Esophagus muscularis mucosa (tissue), 4 donors: ENCODE measurements at regions of chr3 and their contacts with region 1.

Region 1: DNA sequence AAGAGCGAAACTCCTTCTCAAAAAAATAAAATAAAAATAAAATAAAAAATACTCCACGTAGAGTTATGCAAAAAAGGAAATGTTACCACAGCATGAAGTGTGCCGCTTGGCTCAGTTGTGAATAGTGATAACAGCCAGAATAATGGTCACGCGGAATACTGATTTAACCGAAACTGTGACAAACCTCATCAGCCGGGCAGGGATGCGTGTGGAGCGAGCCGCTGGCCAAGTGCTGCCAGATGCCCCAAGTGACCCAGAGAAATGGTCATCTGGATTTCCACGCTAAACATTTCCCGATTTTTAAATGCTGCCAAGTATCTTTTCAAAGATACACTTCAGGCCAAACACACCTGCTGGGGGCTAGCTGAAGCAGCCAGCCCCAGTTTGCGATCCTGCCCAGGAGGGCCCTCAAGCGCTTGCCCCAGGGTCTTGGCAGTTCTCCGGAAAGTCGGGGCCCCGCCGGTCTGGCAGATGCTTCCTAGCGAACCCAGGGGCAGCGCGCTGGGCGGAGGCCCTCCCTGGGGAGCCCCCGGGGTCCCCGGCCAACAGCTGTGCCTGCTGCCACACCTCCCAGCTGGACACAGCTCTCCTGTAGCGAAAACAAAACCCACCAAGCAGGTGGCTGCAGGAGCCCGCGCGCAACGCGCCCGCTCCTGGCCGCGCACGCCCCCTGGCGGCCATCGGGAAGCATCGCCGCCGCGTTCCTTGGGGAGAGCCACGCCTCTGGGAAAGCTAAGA is 35.1 kb downstream of the CMTM6 start:
- DNase-seq: peak; percentile 31
- H3K4me3 ChIP-seq: peak overlapping the region; percentile 45 to 60 (median 50)
- H3K27ac ChIP-seq: peak overlapping the region in 1 of 4 donors; percentile 27
- H3K4me1 ChIP-seq: peaks cover 8 to 41% (median 29%) of the 10 kb centered on the region in 4 donors
- H3K27me3 ChIP-seq: no peaks in the 10 kb centered on the region
- CTCF ChIP-seq: peak; percentile 93 to 100 (median 98)
- EP300 ChIP-seq: no peak
- POLR2A ChIP-seq: no peak

Region 2: DNA sequence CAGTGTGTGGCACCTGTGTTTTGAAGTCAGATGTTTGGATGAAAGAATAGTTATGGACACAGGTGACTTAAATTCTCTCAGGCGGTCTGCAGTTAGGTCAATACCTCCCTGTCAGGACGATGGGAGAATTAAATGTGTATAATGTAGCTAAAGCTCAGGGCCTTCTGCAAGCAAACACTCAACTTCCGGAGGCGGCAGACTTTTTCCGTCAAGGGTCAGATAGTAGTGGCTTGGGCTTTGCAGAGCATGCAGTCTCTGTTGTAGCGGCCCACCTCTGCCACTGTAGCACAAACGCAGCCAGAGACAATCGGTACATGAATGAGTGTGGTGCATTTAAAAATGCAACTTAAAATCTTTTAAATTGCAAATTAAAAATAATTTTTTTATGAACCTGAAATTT is 181.6 kb before region 1 on chr3:
- intact Hi-C with region 1: no loop called
- DNase-seq: no peak
- H3K4me3 ChIP-seq: no peak overlapping the region
- H3K27ac ChIP-seq: no peak overlapping the region
- H3K4me1 ChIP-seq: peaks cover 0 to 5% (median 0%) of the 10 kb centered on the region in 4 donors
- H3K27me3 ChIP-seq: no peaks in the 10 kb centered on the region
- CTCF ChIP-seq: no peak
- EP300 ChIP-seq: no peak
- POLR2A ChIP-seq: no peak

Region 3: DNA sequence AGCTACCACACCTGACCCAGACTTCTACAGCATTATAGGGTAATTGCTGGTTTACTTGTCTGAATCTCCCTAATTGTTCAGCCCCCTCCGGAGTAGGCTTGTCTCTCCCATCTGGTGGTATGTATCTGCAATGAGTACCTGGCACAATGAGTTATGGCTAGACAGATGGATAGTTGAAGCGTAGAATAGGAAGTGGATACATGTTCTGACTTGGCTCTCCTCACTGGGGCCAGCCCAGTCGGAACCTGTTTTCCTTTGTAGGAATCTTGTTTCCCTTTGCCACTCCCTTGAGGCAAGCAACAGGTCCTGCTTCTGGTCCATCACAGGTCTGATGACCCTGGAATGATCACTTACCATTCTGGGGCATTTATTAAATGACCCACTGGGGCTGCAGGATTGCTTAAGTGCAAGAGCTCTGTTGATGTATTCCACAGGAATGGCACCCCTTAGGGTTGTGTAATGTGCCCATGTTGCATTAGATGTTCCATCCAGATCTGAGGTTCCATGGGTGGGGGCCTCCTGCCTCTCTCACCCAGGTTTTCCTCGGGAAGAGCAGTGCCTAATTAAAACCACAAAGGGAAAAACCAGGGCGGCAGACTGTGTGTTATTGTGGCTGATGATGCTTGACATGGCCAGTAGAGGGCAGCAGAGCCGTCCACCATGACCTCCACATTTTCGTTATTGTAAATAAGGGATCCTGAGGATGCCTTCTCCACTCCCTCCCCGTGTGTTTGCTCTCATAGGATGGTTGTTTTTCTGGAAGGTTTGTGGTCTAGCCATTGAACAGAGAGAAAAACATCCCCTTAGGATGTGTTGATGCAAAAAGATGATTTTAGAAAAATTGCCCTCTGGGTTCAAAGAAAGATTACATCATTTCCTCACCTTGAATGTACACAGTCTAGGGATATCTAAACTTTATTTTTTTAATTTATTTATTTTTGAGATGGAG is 171.0 kb before region 1 on chr3:
- intact Hi-C with region 1: loop called (anchors 5 kb)
- DNase-seq: no peak
- H3K4me3 ChIP-seq: no peak overlapping the region
- H3K27ac ChIP-seq: no peak overlapping the region
- H3K4me1 ChIP-seq: no peaks in the 10 kb centered on the region
- H3K27me3 ChIP-seq: no peaks in the 10 kb centered on the region
- CTCF ChIP-seq: peak; percentile 80 to 91 (median 89)
- EP300 ChIP-seq: no peak
- POLR2A ChIP-seq: no peak

Region 4: GRCh38 chr3:32374788-32375595 is 92.5 kb before region 1 on chr3:
- intact Hi-C with region 1: loop called (anchors 2 kb)
- DNase-seq: no peak
- H3K4me3 ChIP-seq: no peak overlapping the region
- H3K27ac ChIP-seq: no peak overlapping the region
- H3K4me1 ChIP-seq: peaks cover 0 to 5% (median 0%) of the 10 kb centered on the region in 4 donors
- H3K27me3 ChIP-seq: no peaks in the 10 kb centered on the region
- CTCF ChIP-seq: peak; percentile 61 to 71 (median 69)
- EP300 ChIP-seq: no peak
- POLR2A ChIP-seq: no peak

Region 5: GRCh38 chr3:32401556-32402081 is 65.9 kb before region 1 on chr3:
- intact Hi-C with region 1: loop called (anchors 2 kb)
- DNase-seq: no peak
- H3K4me3 ChIP-seq: peak overlapping the region; percentile 55 to 59 (median 57)
- H3K27ac ChIP-seq: peak overlapping the region; percentile 72 to 83 (median 82)
- H3K4me1 ChIP-seq: peaks cover 25 to 34% (median 31%) of the 10 kb centered on the region in 4 donors
- H3K27me3 ChIP-seq: no peaks in the 10 kb centered on the region
- CTCF ChIP-seq: no peak
- EP300 ChIP-seq: no peak
- POLR2A ChIP-seq: no peak

Region 6: DNA sequence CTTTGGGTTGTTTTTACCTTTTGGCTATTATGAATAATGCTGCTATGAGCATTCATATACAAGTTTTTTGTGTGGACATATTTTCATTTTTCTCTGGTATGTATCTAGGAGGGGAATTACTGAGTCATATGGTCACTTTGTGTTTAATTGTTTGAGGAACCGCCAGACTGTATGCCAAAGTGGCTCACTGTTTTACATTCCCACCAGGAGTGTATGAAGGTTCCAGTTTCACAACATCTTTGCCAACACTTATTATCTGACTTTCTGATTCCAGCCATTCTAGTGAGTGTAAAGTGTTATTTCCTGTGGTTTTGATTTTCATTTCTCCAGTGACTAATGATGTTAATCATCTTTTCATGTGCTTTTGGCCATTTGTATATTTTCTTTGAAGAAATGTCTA is 24.0 kb before region 1 on chr3:
- intact Hi-C with region 1: no loop called
- DNase-seq: no peak
- H3K4me3 ChIP-seq: no peak overlapping the region
- H3K27ac ChIP-seq: no peak overlapping the region
- H3K4me1 ChIP-seq: peaks cover 0 to 2% (median 0%) of the 10 kb centered on the region in 4 donors
- H3K27me3 ChIP-seq: no peaks in the 10 kb centered on the region
- CTCF ChIP-seq: no peak
- EP300 ChIP-seq: no peak
- POLR2A ChIP-seq: no peak

Region 7: DNA sequence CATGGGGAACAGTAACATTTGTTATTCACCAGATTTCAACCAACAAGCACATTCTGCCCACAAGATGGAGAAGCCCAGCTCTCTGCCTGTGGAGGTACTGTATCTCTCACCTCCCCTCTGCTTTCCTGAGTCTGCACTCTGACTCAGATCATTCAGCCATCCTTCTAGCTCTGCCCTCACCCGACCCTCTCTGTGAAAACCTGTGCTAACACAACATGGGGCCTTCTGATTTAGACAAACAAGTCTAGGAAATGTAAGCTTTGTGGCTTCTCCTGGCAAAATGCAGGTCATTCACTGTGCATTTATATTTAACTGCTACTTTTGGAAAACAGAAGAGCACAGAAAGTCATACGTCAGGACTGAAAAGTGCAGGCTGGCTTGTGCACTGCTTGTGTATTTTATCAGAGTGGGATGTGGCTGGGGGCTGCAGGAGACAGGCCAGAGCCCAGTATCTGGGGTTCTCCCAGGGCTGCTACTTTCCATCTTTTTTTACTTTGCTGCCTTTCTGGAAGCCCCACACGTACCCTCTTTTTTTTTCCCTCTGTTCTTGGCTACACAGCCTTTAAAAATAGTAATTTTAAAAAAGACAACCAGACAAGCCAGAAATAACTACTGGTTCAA is 700.3 kb after region 1 on chr3:
- intact Hi-C with region 1: no loop called
- DNase-seq: no peak
- H3K4me3 ChIP-seq: no peak overlapping the region
- H3K27ac ChIP-seq: no peak overlapping the region
- H3K4me1 ChIP-seq: peaks cover 0 to 8% (median 5%) of the 10 kb centered on the region in 4 donors
- H3K27me3 ChIP-seq: no peaks in the 10 kb centered on the region
- CTCF ChIP-seq: no peak
- EP300 ChIP-seq: no peak
- POLR2A ChIP-seq: no peak